ENCODE measurements at regions of chr3 and their contacts with region 1.

Region 1: DNA sequence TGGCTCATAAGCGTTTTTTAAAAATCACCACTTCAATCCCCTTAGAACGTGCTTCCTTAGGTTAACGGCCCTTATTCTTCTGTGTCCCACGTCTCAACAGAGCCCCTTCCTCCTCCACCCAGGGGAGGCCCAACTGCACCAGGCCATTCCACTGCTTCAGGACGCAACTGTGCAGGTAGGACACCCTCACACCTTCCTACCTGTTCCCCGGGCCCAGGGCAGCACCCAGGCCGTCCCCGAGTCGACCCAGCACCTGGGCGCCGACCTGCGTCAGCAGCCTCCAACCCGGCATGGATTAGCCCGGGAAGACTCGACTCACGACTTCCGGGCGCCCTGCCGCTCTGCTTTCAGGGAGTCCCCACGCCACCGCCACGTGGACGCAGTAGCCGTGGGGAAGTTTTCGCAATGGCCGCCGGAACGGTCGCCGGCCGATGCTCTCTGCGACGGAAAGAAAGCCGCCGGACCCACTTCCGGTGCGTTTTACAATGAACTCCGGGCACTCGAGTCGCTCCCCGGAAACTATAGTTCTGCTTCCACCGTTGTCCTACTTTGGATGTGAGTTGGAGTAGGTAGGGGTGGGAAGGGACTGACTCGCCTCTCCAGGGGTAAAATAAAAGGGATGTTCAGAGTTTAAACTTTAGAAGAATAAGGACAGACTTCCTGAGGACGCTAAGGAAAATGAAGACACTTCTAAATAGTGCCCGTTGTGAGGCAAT is at the start of gene MRPL3:
- DNase-seq: peak; percentile 91
- ATAC-seq: peak; percentile 90
- H3K4me3 ChIP-seq: peak within 1 kb of the TSS; percentile 72 to 97 (median 89)
- H3K4me3 Mint-ChIP-seq: peak within 1 kb of the TSS; percentile 97
- H3K27ac ChIP-seq: peak within 1 kb of the TSS; percentile 53 to 80
- H3K27ac Mint-ChIP-seq: peak within 1 kb of the TSS; percentile 93
- H3K4me1 ChIP-seq: peaks cover 21 to 25% of the 10 kb centered on the region in 2 donors
- H3K4me1 Mint-ChIP-seq: peaks cover 36% of the 10 kb centered on the region
- H3K27me3 ChIP-seq: peaks cover 0 to 2% (median 0%) of the 10 kb centered on the region in 4 experiments
- H3K27me3 Mint-ChIP-seq: no peaks in the 10 kb centered on the region
- CTCF ChIP-seq: no peak
- total RNA-seq, gene MRPL3: 40.9 and 50.1 TPM in 2 replicates

Region 2: GRCh38 chr3:130746246-130747039 is 756.2 kb before region 1 on chr3 and contains the start of gene PIK3R4:
- CTCF ChIA-PET with region 1: no interaction called
- POLR2A ChIA-PET with region 1: no interaction called
- intact Hi-C with region 1: loop called (anchors 2 kb)
- DNase-seq: peak; percentile 97
- ATAC-seq: peak; percentile 85
- H3K4me3 ChIP-seq: peak within 1 kb of the TSS; percentile 71 to 96 (median 95)
- H3K4me3 Mint-ChIP-seq: peak within 1 kb of the TSS; percentile 96
- H3K27ac ChIP-seq: peak within 1 kb of the TSS; percentile 76 to 93
- H3K27ac Mint-ChIP-seq: peak within 1 kb of the TSS; percentile 95
- H3K4me1 ChIP-seq: peaks cover 24 to 28% of the 10 kb centered on the region in 2 donors
- H3K4me1 Mint-ChIP-seq: peaks cover 42% of the 10 kb centered on the region
- H3K27me3 ChIP-seq: no peaks in the 10 kb centered on the region
- H3K27me3 Mint-ChIP-seq: no peaks in the 10 kb centered on the region
- CTCF ChIP-seq: no peak
- total RNA-seq, gene PIK3R4: 27.1 and 32.8 TPM in 2 replicates

Region 3: GRCh38 chr3:131026321-131027178 is 476.1 kb before region 1 on chr3 and contains the starts of genes ASTE1 and NEK11:
- CTCF ChIA-PET with region 1: no interaction called
- POLR2A ChIA-PET with region 1: no interaction called
- intact Hi-C with region 1: loop called (anchors 1 kb)
- DNase-seq: peak; percentile 94
- ATAC-seq: peak; percentile 97
- H3K4me3 ChIP-seq: peak within 1 kb of the TSS; percentile 90 to 95 (median 91)
- H3K4me3 Mint-ChIP-seq: peak within 1 kb of the TSS; percentile 97
- H3K27ac ChIP-seq: peak within 1 kb of the TSS; percentile 91 to 94
- H3K27ac Mint-ChIP-seq: peak within 1 kb of the TSS; percentile 98
- H3K4me1 ChIP-seq: peaks cover 31 to 32% of the 10 kb centered on the region in 2 donors
- H3K4me1 Mint-ChIP-seq: peaks cover 48% of the 10 kb centered on the region
- H3K27me3 ChIP-seq: no peaks in the 10 kb centered on the region
- H3K27me3 Mint-ChIP-seq: no peaks in the 10 kb centered on the region
- CTCF ChIP-seq: no peak
- total RNA-seq, gene ASTE1: 21.8 and 23.0 TPM in 2 replicates
- total RNA-seq, gene NEK11: 5.7 and 7.7 TPM in 2 replicates

Region 4: GRCh38 chr3:131381444-131382291 is 121.0 kb before region 1 on chr3 and contains the start of gene NUDT16:
- CTCF ChIA-PET with region 1: no interaction called
- POLR2A ChIA-PET with region 1: no interaction called
- intact Hi-C with region 1: loop called (anchors 1 kb)
- DNase-seq: peak; percentile 97
- ATAC-seq: peak; percentile 98
- H3K4me3 ChIP-seq: peak within 1 kb of the TSS; percentile 65 to 99 (median 92)
- H3K4me3 Mint-ChIP-seq: peak within 1 kb of the TSS; percentile 98
- H3K27ac ChIP-seq: peak within 1 kb of the TSS; percentile 57 to 59
- H3K27ac Mint-ChIP-seq: peak within 1 kb of the TSS; percentile 96
- H3K4me1 ChIP-seq: peaks cover 17 to 26% of the 10 kb centered on the region in 2 donors
- H3K4me1 Mint-ChIP-seq: peaks cover 26% of the 10 kb centered on the region
- H3K27me3 ChIP-seq: no peaks in the 10 kb centered on the region
- H3K27me3 Mint-ChIP-seq: no peaks in the 10 kb centered on the region
- CTCF ChIP-seq: peak; percentile 39
- total RNA-seq, gene NUDT16: 17.6 and 19.1 TPM in 2 replicates

Region 5: DNA sequence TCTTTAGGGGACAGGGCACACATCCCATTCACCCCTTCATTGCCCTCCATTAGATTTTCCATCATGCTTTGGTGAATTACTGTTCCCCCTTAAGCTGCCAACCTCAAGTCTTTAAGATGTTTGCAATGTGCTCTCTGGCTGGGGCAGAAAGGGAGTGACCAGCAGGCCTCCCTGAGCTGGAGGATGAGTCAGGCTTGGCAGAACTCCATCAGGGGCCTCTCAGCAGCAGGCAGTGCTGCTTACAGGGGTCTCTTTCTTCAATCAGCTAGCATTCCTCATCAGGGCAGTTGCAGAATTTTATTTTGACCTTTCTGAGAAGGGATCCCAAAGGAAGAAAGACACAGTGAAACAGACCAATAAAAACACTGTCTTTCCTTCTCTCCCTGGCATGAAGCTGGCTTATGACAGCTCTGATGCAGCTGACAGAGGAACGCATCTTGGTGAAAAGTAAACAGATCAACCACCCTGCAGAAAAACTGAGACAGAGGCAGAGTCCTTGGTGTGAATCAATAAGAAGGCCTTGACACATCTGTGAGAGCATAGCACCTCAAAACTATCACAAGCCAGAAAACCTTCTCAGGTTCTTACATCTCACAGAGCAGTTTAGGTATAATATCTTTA is 88.8 kb after region 1 on chr3:
- CTCF ChIA-PET with region 1: no interaction called
- POLR2A ChIA-PET with region 1: no interaction called
- intact Hi-C with region 1: no loop called
- DNase-seq: no peak
- ATAC-seq: no peak
- H3K4me3 ChIP-seq: no peak overlapping the region
- H3K4me3 Mint-ChIP-seq: no peak overlapping the region
- H3K27ac ChIP-seq: no peak overlapping the region
- H3K27ac Mint-ChIP-seq: no peak overlapping the region
- H3K4me1 ChIP-seq: no peaks in the 10 kb centered on the region
- H3K4me1 Mint-ChIP-seq: no peaks in the 10 kb centered on the region
- H3K27me3 ChIP-seq: peaks cover 0 to 5% (median 0%) of the 10 kb centered on the region in 4 experiments
- H3K27me3 Mint-ChIP-seq: peaks cover 13% of the 10 kb centered on the region
- CTCF ChIP-seq: no peak

Region 6: DNA sequence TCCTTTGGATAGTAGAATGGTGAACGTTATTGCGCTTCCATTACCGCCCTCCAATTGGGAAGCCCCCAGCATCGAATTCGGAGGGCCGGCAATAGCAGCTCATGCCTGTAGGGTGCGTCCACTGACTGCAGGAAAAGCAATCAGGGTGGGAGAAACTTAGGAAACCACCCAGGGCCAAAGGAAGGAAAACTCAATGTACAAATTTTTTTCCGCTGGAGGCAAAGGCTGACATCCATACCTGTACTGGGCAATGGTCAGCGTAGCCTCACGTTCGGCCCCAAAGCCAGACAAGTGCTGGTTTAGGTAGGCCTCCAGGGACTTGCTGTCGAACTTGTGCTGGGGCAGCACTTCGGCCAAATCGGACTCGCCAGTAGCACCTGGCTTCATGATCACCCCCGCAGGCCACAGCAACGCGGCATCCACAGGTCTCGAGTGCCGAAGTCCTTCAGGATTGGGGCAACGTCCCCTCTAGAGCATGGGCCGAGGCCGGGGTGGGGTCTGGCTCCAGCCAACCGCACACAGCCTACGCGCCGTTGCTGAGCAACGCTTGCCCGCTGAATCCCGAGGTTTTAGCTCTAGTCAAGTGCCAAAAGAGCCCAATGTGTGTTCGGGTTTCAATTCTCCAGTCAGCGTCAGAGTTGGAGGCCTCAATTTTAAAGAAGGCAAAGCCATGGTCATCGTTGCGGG is 1156.8 kb after region 1 on chr3 and contains the start of gene ACAD11:
- CTCF ChIA-PET with region 1: no interaction called
- POLR2A ChIA-PET with region 1: no interaction called
- intact Hi-C with region 1: loop called (anchors 5 kb)
- DNase-seq: peak; percentile 78
- ATAC-seq: peak; percentile 71
- H3K4me3 ChIP-seq: peak within 1 kb of the TSS; percentile 67 to 97 (median 77)
- H3K4me3 Mint-ChIP-seq: peak within 1 kb of the TSS; percentile 97
- H3K27ac ChIP-seq: peak within 1 kb of the TSS; percentile 69 to 80
- H3K27ac Mint-ChIP-seq: peak within 1 kb of the TSS; percentile 95
- H3K4me1 ChIP-seq: peaks cover 15 to 21% of the 10 kb centered on the region in 2 donors
- H3K4me1 Mint-ChIP-seq: peaks cover 31% of the 10 kb centered on the region
- H3K27me3 ChIP-seq: no peaks in the 10 kb centered on the region
- H3K27me3 Mint-ChIP-seq: no peaks in the 10 kb centered on the region
- CTCF ChIP-seq: peak; percentile 62
- total RNA-seq, gene ACAD11: 26.9 and 30.2 TPM in 2 replicates